ENCODE measurements at regions of chr10 and their contacts with region 1.

Region 1: GRCh38 chr10:23314835-23315239 is 29.8 kb downstream of the C10orf67 start:
- DNase-seq: peak; percentile 61 to 82 (median 73)
- H3K4me3 ChIP-seq: no peak overlapping the region
- H3K27ac ChIP-seq: no peak overlapping the region
- H3K4me1 ChIP-seq: no peaks in the 10 kb centered on the region
- H3K27me3 ChIP-seq: no peaks in the 10 kb centered on the region
- CTCF ChIP-seq: peak; percentile 59 to 81 (median 70)
- POLR2A ChIP-seq: no peak

Region 2: GRCh38 chr10:23525406-23525805 is 210.6 kb after region 1 on chr10:
- intact Hi-C with region 1: loop called (anchors 5 kb)
- DNase-seq: peak in 6 of 7 donors; percentile 25 to 69 (median 44)
- H3K4me3 ChIP-seq: no peak overlapping the region
- H3K27ac ChIP-seq: no peak overlapping the region
- H3K4me1 ChIP-seq: no peaks in the 10 kb centered on the region
- H3K27me3 ChIP-seq: no peaks in the 10 kb centered on the region
- CTCF ChIP-seq: peak; percentile 29 to 61 (median 56)
- POLR2A ChIP-seq: no peak

Region 3: GRCh38 chr10:23702977-23703414 is 388.2 kb after region 1 on chr10:
- intact Hi-C with region 1: loop called in 1 of 2 experiments (anchors 10 kb)
- DNase-seq: peak; percentile 37 to 70 (median 57)
- H3K4me3 ChIP-seq: no peak overlapping the region
- H3K27ac ChIP-seq: no peak overlapping the region
- H3K4me1 ChIP-seq: no peaks in the 10 kb centered on the region
- H3K27me3 ChIP-seq: peaks cover 12% of the 10 kb centered on the region
- CTCF ChIP-seq: peak; percentile 35 to 65 (median 64)
- POLR2A ChIP-seq: no peak